ENCODE measurements at regions of chr1 and their contacts with region 1.

Region 1: DNA sequence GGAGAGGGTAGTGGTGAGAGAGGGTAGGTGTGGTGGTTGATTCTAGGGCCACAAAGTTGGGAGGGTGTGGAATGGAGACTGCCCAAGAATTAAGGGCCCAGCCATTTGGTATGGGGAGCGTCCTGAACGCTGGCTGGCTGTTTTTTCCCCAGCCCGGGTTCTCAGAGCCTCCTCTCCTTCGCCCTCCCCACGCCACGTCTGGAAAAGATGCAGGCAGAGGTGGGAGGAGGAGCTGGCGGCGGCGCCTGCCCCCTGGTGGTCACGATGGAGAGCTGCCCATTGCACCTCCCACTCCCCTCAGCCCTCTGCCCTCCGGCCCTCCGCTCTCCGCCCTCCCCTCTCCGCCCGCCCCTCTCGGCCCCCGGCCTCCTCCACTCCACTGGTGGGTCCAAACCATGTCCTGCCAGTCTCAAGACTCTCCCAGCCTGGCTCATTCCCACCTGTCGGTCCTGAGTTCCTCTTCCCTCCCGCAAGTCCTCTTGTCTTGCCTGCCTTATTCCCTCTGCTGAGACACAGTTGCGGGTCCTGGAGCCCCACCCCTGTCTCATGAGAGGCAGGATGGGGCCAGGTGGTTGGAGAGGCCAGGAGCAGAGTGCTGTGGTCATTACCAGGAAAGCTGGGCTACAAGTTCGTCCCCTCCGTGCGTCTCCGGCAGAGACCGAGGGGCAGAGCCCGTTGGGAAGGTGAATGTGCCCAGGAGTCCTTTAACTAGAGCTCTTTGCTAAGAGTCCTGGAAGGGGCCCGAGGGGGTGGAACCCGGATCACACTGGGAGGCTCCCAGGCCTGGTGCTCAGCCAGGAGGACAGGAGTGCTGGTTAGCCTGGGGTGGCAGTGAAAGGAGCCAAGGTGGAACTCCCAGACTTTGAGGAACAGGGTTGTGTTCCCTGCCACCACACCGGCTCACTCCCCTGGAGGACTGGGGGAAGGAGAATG is 22.6 kb downstream of the ETNK2 start:
- DNase-seq: peak; percentile 69

Region 2: DNA sequence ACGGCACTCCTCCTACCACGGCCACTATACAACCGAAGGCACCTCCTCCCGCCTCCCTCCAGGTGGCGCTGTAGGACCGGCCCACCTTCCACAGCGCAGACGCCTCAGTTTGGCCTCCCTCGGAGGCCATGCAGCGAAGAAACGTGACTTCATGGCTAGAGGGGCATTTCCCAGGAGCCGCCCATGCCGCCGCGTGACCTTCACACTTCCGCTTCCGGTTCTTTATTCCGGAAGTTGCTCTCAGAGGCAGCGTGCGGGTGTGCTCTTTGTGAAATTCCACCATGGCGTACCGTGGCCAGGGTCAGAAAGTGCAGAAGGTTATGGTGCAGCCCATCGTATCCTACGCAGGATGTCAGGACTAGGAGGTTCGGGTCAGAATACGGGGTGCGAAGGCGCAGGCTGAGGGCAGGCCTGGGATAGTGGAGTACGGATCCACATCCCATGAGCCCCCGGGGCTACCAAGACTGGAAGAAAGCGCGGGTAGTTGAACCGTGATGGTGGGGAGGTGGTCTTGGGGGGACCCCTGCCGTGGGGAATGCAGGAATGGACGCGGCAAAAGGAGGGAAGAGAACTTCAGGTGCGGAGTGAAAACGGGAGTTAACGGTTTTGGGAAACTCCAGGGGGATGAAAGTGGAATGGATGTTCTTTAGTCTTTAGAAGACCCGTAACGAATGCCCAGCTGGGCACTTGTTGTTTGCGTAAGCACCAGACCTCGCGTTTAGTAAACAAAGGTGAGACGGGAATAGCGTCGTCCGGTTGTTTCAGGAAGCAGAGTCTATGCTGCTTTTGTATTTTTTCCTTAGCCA is 267.6 kb before region 1 on chr1 and contains the start of gene SNRPE:
- in situ Hi-C with region 1: loop called (anchors 25 kb)
- DNase-seq: peak; percentile 99